ENCODE measurements at regions of chr10 and their contacts with region 1.

Region 1: GRCh38 chr10:83871187-83872081 is 267.9 kb upstream of the GHITM start:
- DNase-seq: peak; percentile 62 to 76 (median 68)
- ATAC-seq: peak; percentile 59 to 94 (median 89)
- H3K4me3 ChIP-seq: no peak overlapping the region
- H3K27ac ChIP-seq: no peak overlapping the region
- H3K4me1 ChIP-seq: peaks cover 0 to 13% (median 3%) of the 10 kb centered on the region in 12 donors
- H3K27me3 ChIP-seq: no peaks in the 10 kb centered on the region
- CTCF ChIP-seq: peak; percentile 90 to 100 (median 94)
- POLR2A ChIP-seq: no peak

Region 2: DNA sequence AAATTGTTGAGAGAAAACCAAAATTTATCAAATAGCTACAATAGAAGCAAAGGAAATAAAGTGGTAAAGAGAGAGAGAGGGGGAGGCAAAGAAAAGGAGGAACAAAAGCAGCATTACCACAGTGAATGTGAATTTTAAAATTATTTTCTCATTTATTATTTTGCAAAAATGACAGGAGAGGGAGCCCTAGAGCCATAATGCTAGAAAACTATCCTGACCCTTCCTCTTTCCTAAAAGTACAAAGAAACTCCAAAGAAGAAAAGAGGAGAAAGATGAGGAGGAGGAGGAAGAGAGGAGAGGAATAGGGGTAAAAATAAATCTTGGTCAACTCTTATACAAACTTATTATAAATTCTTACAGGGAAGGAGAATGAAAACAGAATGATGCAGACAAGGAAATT is 1074.9 kb before region 1 on chr10:
- intact Hi-C with region 1: loop called (anchors 2 to 10 kb)
- DNase-seq: no peak
- ATAC-seq: peak in 1 of 4 donors; percentile 31
- H3K4me3 ChIP-seq: no peak overlapping the region
- H3K27ac ChIP-seq: no peak overlapping the region
- H3K4me1 ChIP-seq: peaks cover 0 to 5% (median 0%) of the 10 kb centered on the region in 12 donors
- H3K27me3 ChIP-seq: no peaks in the 10 kb centered on the region
- CTCF ChIP-seq: peak in 9 of 12 donors; percentile 17 to 59 (median 39)
- POLR2A ChIP-seq: no peak

Region 3: GRCh38 chr10:83539528-83540308 is 331.7 kb before region 1 on chr10:
- intact Hi-C with region 1: loop called in 2 of 10 experiments (anchors 5 to 10 kb)
- DNase-seq: peak; percentile 80 to 89 (median 87)
- ATAC-seq: peak; percentile 88 to 98 (median 96)
- H3K4me3 ChIP-seq: no peak overlapping the region
- H3K27ac ChIP-seq: peak overlapping the region; percentile 23 to 92 (median 64)
- H3K4me1 ChIP-seq: peaks cover 0 to 42% (median 9%) of the 10 kb centered on the region in 12 donors
- H3K27me3 ChIP-seq: no peaks in the 10 kb centered on the region
- CTCF ChIP-seq: no peak
- POLR2A ChIP-seq: no peak

Region 4: GRCh38 chr10:83680470-83680891 is 191.0 kb before region 1 on chr10:
- intact Hi-C with region 1: no loop called
- DNase-seq: no peak
- ATAC-seq: no peak
- H3K4me3 ChIP-seq: no peak overlapping the region
- H3K27ac ChIP-seq: no peak overlapping the region
- H3K4me1 ChIP-seq: peaks cover 0 to 9% (median 0%) of the 10 kb centered on the region in 12 donors
- H3K27me3 ChIP-seq: no peaks in the 10 kb centered on the region
- CTCF ChIP-seq: no peak
- POLR2A ChIP-seq: no peak

Region 5: GRCh38 chr10:83925133-83925532 is 53.7 kb after region 1 on chr10:
- intact Hi-C with region 1: no loop called
- DNase-seq: no peak
- ATAC-seq: no peak
- H3K4me3 ChIP-seq: no peak overlapping the region
- H3K27ac ChIP-seq: no peak overlapping the region
- H3K4me1 ChIP-seq: no peaks in the 10 kb centered on the region
- H3K27me3 ChIP-seq: no peaks in the 10 kb centered on the region
- CTCF ChIP-seq: no peak
- POLR2A ChIP-seq: no peak

Region 6: DNA sequence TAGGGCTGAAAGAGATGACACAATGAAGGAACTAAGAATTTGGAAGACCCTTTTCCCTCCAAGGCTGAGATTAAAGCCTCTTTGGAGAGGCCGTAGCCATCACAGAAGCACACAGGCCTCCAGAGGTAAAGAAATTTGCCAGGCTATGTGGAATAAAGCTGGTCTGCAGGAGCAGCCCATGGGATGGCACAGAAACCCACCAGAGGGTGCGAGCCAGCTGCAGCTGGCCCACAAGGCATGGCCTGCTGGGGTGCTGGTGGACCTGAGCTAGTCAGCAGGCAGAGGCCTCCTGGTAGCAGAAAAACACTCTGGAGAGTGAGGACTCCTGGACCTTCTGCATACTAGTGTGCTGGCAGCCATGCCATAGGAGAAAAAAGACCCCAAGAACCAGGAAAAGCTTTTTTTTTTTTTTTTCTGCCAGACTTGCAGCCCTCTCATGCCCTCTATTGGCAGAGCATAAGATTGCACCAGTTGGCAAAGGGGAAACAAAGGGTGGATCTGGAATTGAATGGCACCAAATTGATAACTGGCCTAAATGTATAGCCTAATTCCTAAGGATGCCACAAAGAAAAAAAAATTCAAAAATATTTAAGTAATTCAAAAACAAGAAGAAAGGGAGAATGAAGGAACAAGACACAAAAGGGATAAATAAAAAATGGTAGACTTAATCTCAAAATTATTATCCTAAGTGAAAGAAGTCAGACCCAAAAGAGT is 155.3 kb after region 1 on chr10:
- intact Hi-C with region 1: no loop called
- DNase-seq: no peak
- ATAC-seq: no peak
- H3K4me3 ChIP-seq: no peak overlapping the region
- H3K27ac ChIP-seq: no peak overlapping the region
- H3K4me1 ChIP-seq: no peaks in the 10 kb centered on the region
- H3K27me3 ChIP-seq: no peaks in the 10 kb centered on the region
- CTCF ChIP-seq: peak; percentile 40 to 64 (median 52)
- POLR2A ChIP-seq: no peak

Region 7: GRCh38 chr10:84097787-84098353 is 226.4 kb after region 1 on chr10:
- intact Hi-C with region 1: loop called in 1 of 10 experiments (anchors 10 kb)
- DNase-seq: no peak
- ATAC-seq: no peak
- H3K4me3 ChIP-seq: no peak overlapping the region
- H3K27ac ChIP-seq: no peak overlapping the region
- H3K4me1 ChIP-seq: peaks cover 0 to 24% (median 11%) of the 10 kb centered on the region in 12 donors
- H3K27me3 ChIP-seq: peaks cover 0 to 4% (median 0%) of the 10 kb centered on the region in 9 donors
- CTCF ChIP-seq: peak in 11 of 12 donors; percentile 26 to 67 (median 48)
- POLR2A ChIP-seq: no peak